Heart left ventricle (tissue), 16 donors: ENCODE measurements at regions of chr22 and their contacts with region 1.

Region 1: DNA sequence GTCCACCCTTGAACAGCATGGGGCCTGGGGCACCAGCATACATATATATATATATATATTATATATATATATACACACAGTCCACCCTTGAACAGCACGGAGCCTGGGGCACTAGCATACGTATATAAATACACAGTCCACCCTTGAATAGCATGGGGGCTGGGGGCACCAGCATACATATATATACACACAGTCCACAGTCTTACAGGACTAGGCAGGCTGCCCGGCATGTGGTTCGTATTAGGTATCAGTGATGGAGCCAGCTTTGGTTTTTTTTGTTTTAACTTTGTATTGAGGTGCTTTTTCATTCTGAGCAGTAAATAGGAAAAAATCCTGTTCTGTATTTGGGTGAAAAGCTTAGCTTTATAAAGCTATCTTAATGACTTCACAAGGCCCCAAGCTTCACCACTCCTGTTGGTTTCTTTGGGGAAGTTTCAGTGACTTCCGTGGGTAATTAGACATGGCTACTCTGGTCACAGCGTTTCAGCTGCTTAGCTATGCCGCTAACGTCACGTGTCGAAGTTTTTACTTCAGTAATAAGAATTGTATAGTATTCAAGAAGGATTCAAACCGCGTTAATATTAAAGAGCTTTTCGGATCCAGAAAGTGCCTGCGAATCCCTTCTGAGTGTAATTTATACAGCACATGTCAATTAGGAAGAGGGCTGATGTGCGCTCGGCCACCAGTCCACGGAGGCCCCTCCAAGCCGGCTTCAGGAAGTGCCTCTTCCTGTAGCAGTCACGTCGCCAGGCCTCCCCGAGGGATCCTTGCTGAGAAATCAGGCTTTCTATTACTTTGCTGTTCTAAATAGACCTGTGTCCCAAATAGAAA is 179.7 kb downstream of the TBC1D22A start:
- DNase-seq: peak; percentile 38 to 69 (median 62)
- ATAC-seq: peak; percentile 64 to 93 (median 78)
- H3K4me3 ChIP-seq: peak overlapping the region in 9 of 12 donors; percentile 15 to 44 (median 23)
- H3K27ac ChIP-seq: peak overlapping the region; percentile 61 to 90 (median 78)
- H3K4me1 ChIP-seq: peaks cover 0 to 18% (median 5%) of the 10 kb centered on the region in 12 donors
- H3K27me3 ChIP-seq: no peaks in the 10 kb centered on the region
- CTCF ChIP-seq: no peak
- POLR2A ChIP-seq: no peak

Region 2: GRCh38 chr22:46845296-46846149 is 96.7 kb before region 1 on chr22:
- intact Hi-C with region 1: loop called in 1 of 10 experiments (anchors 10 kb)
- DNase-seq: no peak
- ATAC-seq: peak in 2 of 4 donors; percentile 28 to 58
- H3K4me3 ChIP-seq: peak overlapping the region in 9 of 12 donors; percentile 3 to 52 (median 39)
- H3K27ac ChIP-seq: peak overlapping the region in 4 of 12 donors; percentile 2 to 50 (median 24)
- H3K4me1 ChIP-seq: peaks cover 0 to 19% (median 0%) of the 10 kb centered on the region in 12 donors
- H3K27me3 ChIP-seq: no peaks in the 10 kb centered on the region
- CTCF ChIP-seq: peak; percentile 9 to 66 (median 52)
- POLR2A ChIP-seq: no peak

Region 3: GRCh38 chr22:46971141-46972091 is 29.2 kb after region 1 on chr22:
- intact Hi-C with region 1: loop called in 1 of 10 experiments (anchors 2 kb)
- DNase-seq: peak; percentile 53 to 69 (median 55)
- ATAC-seq: peak; percentile 71 to 87 (median 81)
- H3K4me3 ChIP-seq: no peak overlapping the region
- H3K27ac ChIP-seq: peak overlapping the region; percentile 5 to 86 (median 67)
- H3K4me1 ChIP-seq: peaks cover 0 to 35% (median 24%) of the 10 kb centered on the region in 12 donors
- H3K27me3 ChIP-seq: no peaks in the 10 kb centered on the region
- CTCF ChIP-seq: no peak
- POLR2A ChIP-seq: no peak

Region 4: DNA sequence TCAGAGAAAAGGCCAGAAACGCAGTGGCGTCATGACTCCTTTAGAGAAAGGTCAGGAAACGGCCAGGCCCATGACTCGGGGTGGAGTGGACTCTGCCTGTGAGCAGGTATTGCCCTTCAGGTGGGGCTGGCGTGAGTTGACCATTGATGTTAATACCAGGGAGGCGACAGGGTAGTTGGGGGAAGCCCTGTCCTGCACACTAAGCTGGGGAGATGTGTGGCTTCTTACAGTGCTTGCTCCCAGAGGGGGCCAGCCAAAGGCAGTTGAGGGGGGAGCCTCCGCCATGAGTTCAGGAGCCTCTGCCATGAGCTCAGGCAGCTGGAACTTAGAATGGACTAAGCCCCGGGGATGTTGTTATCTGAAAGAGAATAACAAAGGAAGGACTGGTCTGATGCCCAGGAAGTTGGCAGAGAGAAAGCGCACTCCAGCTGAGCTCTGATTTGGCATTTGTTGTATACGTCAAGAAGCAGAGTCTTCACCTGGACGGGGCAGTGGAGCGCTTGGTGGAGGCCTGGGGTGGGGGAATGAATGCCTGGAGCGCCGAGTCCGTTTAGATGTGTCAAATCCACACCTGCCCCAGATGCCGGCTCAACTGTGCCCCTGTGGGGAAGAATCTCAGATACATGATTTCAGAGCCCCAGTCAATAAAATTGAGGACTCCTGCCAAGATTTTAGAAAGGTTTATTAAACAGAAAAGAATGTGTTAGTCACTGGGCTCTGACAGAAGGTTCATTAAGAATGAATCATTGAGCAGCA is 42.7 kb after region 1 on chr22:
- intact Hi-C with region 1: no loop called
- DNase-seq: no peak
- ATAC-seq: peak in 1 of 4 donors; percentile 16
- H3K4me3 ChIP-seq: no peak overlapping the region
- H3K27ac ChIP-seq: no peak overlapping the region
- H3K4me1 ChIP-seq: no peaks in the 10 kb centered on the region
- H3K27me3 ChIP-seq: no peaks in the 10 kb centered on the region
- CTCF ChIP-seq: no peak
- POLR2A ChIP-seq: no peak

Region 5: DNA sequence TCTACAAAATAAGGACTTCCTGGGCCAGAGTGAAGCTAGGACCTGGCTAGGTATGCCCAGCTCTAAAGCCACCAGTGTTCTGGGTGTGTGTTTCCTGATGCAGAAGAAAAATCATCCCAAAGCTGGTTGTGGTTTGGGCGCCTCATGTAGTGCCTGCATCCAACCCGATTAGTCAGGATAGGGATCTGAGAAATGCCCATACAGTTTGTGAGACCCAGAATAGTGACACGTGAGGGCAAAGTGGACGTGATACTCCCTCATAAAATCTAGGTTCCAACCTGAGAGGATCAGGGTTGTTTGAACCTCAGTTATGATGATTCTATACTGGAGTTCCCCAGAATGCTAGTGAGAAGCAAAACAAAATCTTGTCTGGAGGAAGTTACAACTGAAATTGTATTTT is 58.7 kb after region 1 on chr22:
- intact Hi-C with region 1: loop called in 1 of 10 experiments (anchors 10 kb)
- DNase-seq: no peak
- ATAC-seq: no peak
- H3K4me3 ChIP-seq: no peak overlapping the region
- H3K27ac ChIP-seq: no peak overlapping the region
- H3K4me1 ChIP-seq: peaks cover 0 to 9% (median 0%) of the 10 kb centered on the region in 12 donors
- H3K27me3 ChIP-seq: no peaks in the 10 kb centered on the region
- CTCF ChIP-seq: no peak
- POLR2A ChIP-seq: no peak

Region 6: GRCh38 chr22:47175151-47176025 is 233.2 kb after region 1 on chr22:
- intact Hi-C with region 1: no loop called
- DNase-seq: peak; percentile 10 to 62 (median 34)
- ATAC-seq: peak; percentile 35 to 67 (median 53)
- H3K4me3 ChIP-seq: peak overlapping the region in 1 of 12 donors; percentile 13
- H3K27ac ChIP-seq: peak overlapping the region in 8 of 12 donors; percentile 29 to 69 (median 34)
- H3K4me1 ChIP-seq: peaks cover 0 to 13% (median 2%) of the 10 kb centered on the region in 12 donors
- H3K27me3 ChIP-seq: no peaks in the 10 kb centered on the region
- CTCF ChIP-seq: no peak
- POLR2A ChIP-seq: no peak